ENCODE measurements at regions of chr17 and their contacts with region 1.

Region 1: DNA sequence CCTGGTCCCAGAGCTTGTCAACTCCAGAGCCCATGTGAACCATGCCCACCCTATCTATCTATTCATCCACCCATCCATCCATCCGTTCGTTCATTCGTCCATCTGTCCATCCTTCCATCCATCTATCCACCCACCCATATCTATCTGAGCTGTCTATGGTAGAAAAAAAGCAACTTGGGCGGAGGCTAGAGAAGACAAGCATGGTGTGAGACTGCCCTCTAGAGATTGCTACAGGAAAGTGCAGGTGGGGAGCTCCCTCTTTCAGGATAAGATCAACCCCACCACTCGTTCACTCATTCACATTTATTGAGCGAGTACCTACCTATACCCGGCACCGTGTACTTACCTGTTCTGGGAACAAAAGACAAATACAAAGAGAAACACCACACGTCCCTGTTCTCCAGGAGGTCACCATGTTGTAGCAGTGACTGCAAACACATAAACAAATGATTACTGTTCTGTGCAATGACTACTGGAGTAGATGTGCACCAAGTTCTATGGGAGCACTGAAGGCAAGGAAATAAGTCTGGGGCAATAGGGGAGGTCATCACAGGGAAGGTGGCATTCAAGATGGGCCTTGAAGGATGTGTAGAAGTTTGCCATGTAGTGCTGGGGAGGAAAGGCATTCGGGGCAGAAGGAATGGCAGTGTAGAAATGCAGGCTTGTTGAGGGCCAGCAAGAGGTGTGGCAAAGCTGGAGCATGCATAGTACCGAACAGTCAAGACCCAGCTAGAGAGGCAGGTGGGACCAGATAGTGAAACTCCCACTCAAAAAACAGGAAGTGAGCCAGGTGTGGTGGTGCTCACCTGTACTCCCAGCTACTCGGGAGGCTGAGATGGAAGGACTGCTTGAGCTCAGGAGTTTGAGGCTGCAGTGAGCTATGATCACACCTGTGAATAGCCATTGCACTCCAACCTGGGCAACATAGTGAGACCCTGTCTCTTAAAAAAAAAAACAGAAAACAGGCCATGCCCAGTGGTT is 13.4 kb upstream of the ATP5MC1 start:
- DNase-seq: peak; percentile 64
- ATAC-seq: peak; percentile 90
- H3K4me3 Mint-ChIP-seq: no peak overlapping the region
- H3K27ac Mint-ChIP-seq: no peak overlapping the region
- H3K4me1 Mint-ChIP-seq: no peaks in the 10 kb centered on the region
- H3K27me3 Mint-ChIP-seq: peaks cover 5% of the 10 kb centered on the region

Region 2: GRCh38 chr17:48799069-48799723 is 80.0 kb before region 1 on chr17:
- CTCF ChIA-PET with region 1: interaction called, 201 read pairs
- POLR2A ChIA-PET with region 1: no interaction called
- intact Hi-C with region 1: loop called in 1 of 2 experiments (anchors 1 kb)
- DNase-seq: no peak
- ATAC-seq: no peak
- H3K4me3 Mint-ChIP-seq: no peak overlapping the region
- H3K27ac Mint-ChIP-seq: no peak overlapping the region
- H3K4me1 Mint-ChIP-seq: no peaks in the 10 kb centered on the region
- H3K27me3 Mint-ChIP-seq: peaks cover 16% of the 10 kb centered on the region

Region 3: DNA sequence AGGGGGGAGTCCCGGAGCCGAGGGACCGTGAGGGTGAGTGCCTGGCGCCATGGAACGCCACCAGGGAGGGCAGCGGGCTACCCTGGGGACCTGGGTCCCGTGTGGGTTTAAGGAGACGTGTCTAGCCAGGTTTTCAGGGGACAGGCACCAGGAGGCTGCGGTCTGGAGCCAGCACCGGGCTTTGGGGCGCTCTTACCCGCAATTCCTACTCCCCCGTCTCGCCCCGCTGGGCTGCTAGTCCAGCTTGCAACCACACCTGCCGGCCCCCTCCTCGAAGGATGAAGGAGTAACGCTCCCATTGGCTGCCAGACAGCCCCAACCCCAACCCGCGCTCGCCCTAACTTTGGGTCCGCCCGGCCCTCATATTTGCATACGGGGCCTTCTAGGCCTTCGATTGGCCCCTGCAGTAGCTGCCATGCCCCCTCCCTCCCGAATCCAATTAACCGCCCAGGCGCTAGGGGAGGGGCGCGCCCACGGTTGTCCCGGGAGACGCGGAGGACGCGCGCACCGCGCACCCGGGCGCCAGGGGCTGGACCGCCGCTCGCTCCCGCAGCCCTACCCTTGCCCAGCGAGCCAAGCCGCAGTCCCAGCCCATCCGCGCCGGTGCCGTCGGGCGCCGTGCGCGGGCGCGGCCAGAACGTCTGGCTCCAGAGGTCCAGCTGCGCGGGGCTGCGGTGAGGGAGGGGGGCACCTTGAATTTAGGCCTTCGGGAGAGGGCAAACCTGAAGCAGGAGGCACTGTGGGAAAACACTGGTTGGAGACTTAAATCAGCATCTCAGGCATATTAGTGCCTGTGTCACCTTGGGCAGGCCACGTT is 62.2 kb before region 1 on chr17 and contains the start of gene TTLL6:
- CTCF ChIA-PET with region 1: interaction called, 203 read pairs
- POLR2A ChIA-PET with region 1: no interaction called
- intact Hi-C with region 1: loop called (anchors 1 kb)
- DNase-seq: peak; percentile 80
- ATAC-seq: peak; percentile 93
- H3K4me3 Mint-ChIP-seq: peak within 1 kb of the TSS; percentile 63
- H3K27ac Mint-ChIP-seq: no peak within 1 kb of the TSS
- H3K4me1 Mint-ChIP-seq: peaks cover 15% of the 10 kb centered on the region
- H3K27me3 Mint-ChIP-seq: peaks cover 35% of the 10 kb centered on the region
- total RNA-seq, gene TTLL6: not detected

Region 4: GRCh38 chr17:48836004-48836403 is 43.2 kb before region 1 on chr17:
- CTCF ChIA-PET with region 1: interaction called, 11 read pairs
- POLR2A ChIA-PET with region 1: no interaction called
- intact Hi-C with region 1: no loop called
- DNase-seq: peak; percentile 23
- ATAC-seq: no peak
- H3K4me3 Mint-ChIP-seq: no peak overlapping the region
- H3K27ac Mint-ChIP-seq: no peak overlapping the region
- H3K4me1 Mint-ChIP-seq: peaks cover 87% of the 10 kb centered on the region
- H3K27me3 Mint-ChIP-seq: peaks cover 2% of the 10 kb centered on the region

Region 5: DNA sequence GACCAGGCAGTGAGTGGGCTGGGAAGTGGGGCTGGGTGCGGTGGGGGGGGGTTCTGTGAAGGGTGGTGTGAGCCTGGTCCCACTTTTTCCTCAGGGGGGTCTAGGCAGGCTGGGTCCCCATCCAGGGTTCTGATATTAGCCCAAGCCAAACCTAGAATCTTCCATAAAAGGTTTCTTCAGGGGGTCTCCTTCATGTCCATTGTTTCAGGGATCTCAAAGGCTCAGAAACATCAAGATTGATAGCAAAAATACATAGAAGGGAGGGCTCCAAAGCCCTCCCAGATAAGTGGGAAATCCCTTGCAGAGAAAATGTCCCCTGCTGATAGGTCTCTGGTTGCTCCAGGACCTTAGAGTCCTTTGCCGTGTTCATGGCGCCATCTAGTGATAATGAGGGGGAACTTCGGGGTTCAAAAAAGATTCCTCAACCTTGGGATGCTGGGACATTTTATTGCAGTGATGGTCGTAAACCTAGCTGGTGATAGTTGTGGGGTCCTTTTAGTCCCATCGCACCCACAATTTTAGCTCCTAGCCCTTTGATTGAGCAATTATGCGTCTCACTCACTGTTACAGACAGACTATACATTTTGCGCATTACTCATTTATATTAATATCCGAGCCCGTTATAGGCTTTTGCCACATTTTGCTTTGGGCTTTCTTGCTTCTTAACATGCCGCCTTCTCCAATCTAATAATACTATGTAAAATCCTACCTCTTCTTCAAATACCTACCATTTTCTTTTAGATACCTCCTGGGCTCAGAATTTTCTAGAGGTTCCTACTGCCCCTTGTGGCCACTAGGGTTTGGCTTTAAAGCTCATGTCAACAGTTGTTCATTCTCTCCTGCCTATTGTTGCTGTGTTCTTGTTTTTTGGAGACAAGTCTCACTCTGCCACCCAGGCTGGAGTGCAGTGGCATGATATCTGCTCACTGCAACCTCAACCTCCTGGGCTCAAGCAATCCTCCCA is 153.0 kb after region 1 on chr17:
- CTCF ChIA-PET with region 1: interaction called, 14 read pairs
- POLR2A ChIA-PET with region 1: no interaction called
- intact Hi-C with region 1: loop called (anchors 1 to 2 kb)
- DNase-seq: peak; percentile 62
- ATAC-seq: peak; percentile 92
- H3K4me3 Mint-ChIP-seq: no peak overlapping the region
- H3K27ac Mint-ChIP-seq: no peak overlapping the region
- H3K4me1 Mint-ChIP-seq: no peaks in the 10 kb centered on the region
- H3K27me3 Mint-ChIP-seq: peaks cover 4% of the 10 kb centered on the region